ENCODE measurements at regions of chr18 and their contacts with region 1.

Region 1: GRCh38 chr18:54647176-54647575 is 56.1 kb downstream of the DYNAP start:
- DNase-seq: peak; percentile 37
- ATAC-seq: peak; percentile 71; the same call in 2 of the 3 replicates
- H3K4me3 ChIP-seq: no peak overlapping the region
- H3K27ac ChIP-seq: no peak overlapping the region
- H3K4me1 ChIP-seq: no peaks in the 10 kb centered on the region
- H3K27me3 ChIP-seq: no peaks in the 10 kb centered on the region; a peak in 1 of 5 replicates
- CTCF ChIP-seq: peak; percentile 50
- EP300 ChIP-seq: no peak
- POLR2A ChIP-seq: no peak
- RAD21 ChIP-seq: no peak

Region 2: DNA sequence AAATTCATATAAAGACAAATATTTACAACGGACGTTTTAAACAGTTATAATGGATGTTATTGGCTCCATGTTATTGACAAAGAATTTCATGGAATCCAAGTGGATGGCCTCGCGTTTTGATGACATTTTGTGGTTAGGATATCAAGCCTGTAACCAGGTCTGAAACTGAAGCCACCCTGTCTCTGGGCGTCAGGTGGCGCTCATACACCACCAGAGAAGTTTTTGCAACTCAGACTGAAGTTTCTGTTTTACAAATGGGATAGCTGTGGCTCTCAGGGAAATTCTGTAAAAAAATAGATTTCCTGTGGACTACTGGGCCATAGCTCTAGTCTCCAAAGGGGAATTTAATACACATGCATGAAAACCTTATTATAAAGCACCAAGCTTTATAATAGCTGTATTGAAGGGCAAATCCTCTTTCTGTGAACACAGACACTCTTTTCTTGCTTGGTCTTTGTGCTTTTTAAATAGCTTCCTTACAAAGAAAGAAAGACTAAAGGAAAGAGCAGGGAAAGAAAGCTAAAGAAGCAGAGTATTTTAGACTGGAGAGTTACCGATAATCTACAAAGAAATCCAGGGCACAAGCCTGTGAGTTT is 202.8 kb before region 1 on chr18:
- CTCF ChIA-PET with region 1: interaction called, 4 read pairs
- POLR2A ChIA-PET with region 1: no interaction called
- in situ Hi-C with region 1: no loop called
- intact Hi-C with region 1: loop called (anchors 1 kb)
- DNase-seq: peak; percentile 32
- ATAC-seq: peak; percentile 87
- H3K4me3 ChIP-seq: no peak overlapping the region
- H3K27ac ChIP-seq: no peak overlapping the region
- H3K4me1 ChIP-seq: no peaks in the 10 kb centered on the region
- H3K27me3 ChIP-seq: no peaks in the 10 kb centered on the region
- CTCF ChIP-seq: peak; percentile 74
- EP300 ChIP-seq: no peak
- POLR2A ChIP-seq: no peak
- RAD21 ChIP-seq: peak; percentile 60

Region 3: GRCh38 chr18:54453996-54454395 is 193.2 kb before region 1 on chr18:
- CTCF ChIA-PET with region 1: no interaction called
- POLR2A ChIA-PET with region 1: no interaction called
- in situ Hi-C with region 1: loop called (anchors 10 kb)
- intact Hi-C with region 1: no loop called
- DNase-seq: no peak
- ATAC-seq: no peak
- H3K4me3 ChIP-seq: no peak overlapping the region
- H3K27ac ChIP-seq: no peak overlapping the region
- H3K4me1 ChIP-seq: no peaks in the 10 kb centered on the region
- H3K27me3 ChIP-seq: no peaks in the 10 kb centered on the region; a peak in 1 of 5 replicates
- CTCF ChIP-seq: no peak
- EP300 ChIP-seq: no peak
- POLR2A ChIP-seq: no peak
- RAD21 ChIP-seq: no peak

Region 4: DNA sequence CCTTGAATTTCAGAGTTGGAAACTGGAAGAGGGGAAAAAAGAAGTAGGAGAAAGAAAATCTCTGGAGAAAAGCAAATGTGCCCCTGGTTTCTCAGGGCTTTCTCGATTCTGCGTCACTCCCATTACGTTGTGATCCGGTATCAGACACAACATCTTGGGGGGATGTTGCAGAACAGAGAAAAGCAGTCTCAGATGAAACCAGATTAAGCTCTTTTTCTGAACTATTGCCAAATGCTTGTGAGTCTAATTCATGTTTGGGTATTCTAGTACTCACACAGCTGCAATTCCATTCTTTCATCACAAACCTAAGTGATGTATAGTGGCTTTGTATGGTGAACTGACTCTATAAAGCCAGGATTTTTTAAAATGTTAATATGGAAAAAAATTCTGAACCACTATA is 707.6 kb after region 1 on chr18:
- CTCF ChIA-PET with region 1: no interaction called
- POLR2A ChIA-PET with region 1: no interaction called
- in situ Hi-C with region 1: no loop called
- intact Hi-C with region 1: no loop called
- DNase-seq: no peak
- ATAC-seq: no peak
- H3K4me3 ChIP-seq: no peak overlapping the region
- H3K27ac ChIP-seq: no peak overlapping the region
- H3K4me1 ChIP-seq: no peaks in the 10 kb centered on the region
- H3K27me3 ChIP-seq: no peaks in the 10 kb centered on the region
- CTCF ChIP-seq: no peak
- EP300 ChIP-seq: no peak
- POLR2A ChIP-seq: no peak
- RAD21 ChIP-seq: no peak